Activated B cell treated with CpG ODN at 0.5 μM for 24 hours (primary cell): ENCODE measurements at regions of chr14 and their contacts with region 1.

Region 1: GRCh38 chr14:49867831-49868723 is 15.5 kb upstream of the NEMF start:
- DNase-seq: peak; percentile 85
- ATAC-seq: peak; percentile 84
- H3K4me3 Mint-ChIP-seq: peak overlapping the region; percentile 95
- H3K27ac Mint-ChIP-seq: peak overlapping the region; percentile 100
- H3K4me1 Mint-ChIP-seq: peaks cover 44% of the 10 kb centered on the region
- H3K27me3 Mint-ChIP-seq: no peaks in the 10 kb centered on the region
- CTCF ChIP-seq: no peak

Region 2: DNA sequence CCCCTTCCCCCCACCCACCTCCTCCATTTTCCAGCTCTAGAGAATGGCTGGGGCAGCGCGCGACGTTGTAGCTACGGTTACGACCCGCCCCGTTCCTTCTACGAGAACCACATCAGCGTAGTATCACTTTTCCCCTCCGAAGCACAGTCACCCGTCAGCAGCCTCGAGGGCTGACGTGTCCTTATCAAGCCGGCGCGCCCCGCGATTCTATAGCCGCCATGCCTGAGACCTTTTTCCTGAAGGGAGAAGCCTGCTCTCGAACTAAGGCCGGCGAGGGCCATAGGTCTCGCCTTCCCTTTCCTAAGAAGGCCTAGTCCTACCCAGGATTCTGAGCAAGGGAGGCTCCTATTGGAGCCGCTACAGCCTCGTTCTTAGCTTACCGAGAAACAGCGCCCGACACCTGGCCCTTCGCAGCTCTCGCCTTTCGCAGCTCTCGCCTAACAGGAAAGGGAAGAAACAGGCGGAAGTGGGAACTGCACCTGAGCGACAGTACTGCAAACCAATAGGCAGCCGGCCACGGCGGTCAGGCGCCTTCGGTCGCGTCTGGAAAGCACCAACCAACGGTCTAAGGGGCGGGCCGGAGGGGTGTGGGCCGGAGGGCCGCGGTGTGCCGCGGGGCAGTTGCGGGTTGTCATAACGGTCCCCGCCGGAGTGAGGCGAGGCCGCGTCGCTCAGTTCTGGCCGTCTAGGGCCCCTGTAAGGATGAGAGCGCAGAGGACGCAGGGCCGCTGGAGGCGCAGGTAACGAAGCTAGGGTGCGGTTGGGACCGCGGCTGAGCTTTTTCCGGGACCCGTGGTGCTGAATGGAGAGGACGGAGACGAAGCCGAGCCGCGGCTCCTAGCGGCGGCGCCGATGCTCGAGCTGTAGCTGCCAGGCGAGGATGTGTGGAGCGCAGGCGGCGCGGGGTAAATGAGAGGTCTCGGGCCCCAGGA is 247.6 kb before region 1 on chr14 and contains the starts of genes MGAT2 and RPL36AL:
- CTCF ChIA-PET with region 1: no interaction called
- POLR2A ChIA-PET with region 1: interaction called, 11 read pairs
- intact Hi-C with region 1: no loop called
- DNase-seq: peak; percentile 90
- ATAC-seq: peak; percentile 90
- H3K4me3 Mint-ChIP-seq: peak within 1 kb of the TSS; percentile 97
- H3K27ac Mint-ChIP-seq: peak within 1 kb of the TSS; percentile 97
- H3K4me1 Mint-ChIP-seq: peaks cover 61% of the 10 kb centered on the region
- H3K27me3 Mint-ChIP-seq: no peaks in the 10 kb centered on the region
- CTCF ChIP-seq: no peak
- total RNA-seq, gene MGAT2: 39.7 and 40.5 TPM in 2 replicates
- total RNA-seq, gene RPL36AL: 150 and 166 TPM in 2 replicates

Region 3: GRCh38 chr14:49959822-49960408 is 91.8 kb after region 1 on chr14:
- CTCF ChIA-PET with region 1: interaction called, 12 read pairs
- POLR2A ChIA-PET with region 1: interaction called, 38 read pairs
- intact Hi-C with region 1: no loop called
- DNase-seq: no peak
- ATAC-seq: peak; percentile 59
- H3K4me3 Mint-ChIP-seq: peak overlapping the region; percentile 71
- H3K27ac Mint-ChIP-seq: peak overlapping the region; percentile 96
- H3K4me1 Mint-ChIP-seq: peaks cover 67% of the 10 kb centered on the region
- H3K27me3 Mint-ChIP-seq: no peaks in the 10 kb centered on the region
- CTCF ChIP-seq: no peak

Region 4: GRCh38 chr14:50045039-50045711 is 177.1 kb after region 1 on chr14:
- CTCF ChIA-PET with region 1: interaction called, 7 read pairs
- POLR2A ChIA-PET with region 1: interaction called, 41 read pairs
- intact Hi-C with region 1: no loop called
- DNase-seq: no peak
- ATAC-seq: peak; percentile 70
- H3K4me3 Mint-ChIP-seq: peak overlapping the region; percentile 2
- H3K27ac Mint-ChIP-seq: peak overlapping the region; percentile 92
- H3K4me1 Mint-ChIP-seq: peaks cover 71% of the 10 kb centered on the region
- H3K27me3 Mint-ChIP-seq: no peaks in the 10 kb centered on the region
- CTCF ChIP-seq: no peak

Region 5: DNA sequence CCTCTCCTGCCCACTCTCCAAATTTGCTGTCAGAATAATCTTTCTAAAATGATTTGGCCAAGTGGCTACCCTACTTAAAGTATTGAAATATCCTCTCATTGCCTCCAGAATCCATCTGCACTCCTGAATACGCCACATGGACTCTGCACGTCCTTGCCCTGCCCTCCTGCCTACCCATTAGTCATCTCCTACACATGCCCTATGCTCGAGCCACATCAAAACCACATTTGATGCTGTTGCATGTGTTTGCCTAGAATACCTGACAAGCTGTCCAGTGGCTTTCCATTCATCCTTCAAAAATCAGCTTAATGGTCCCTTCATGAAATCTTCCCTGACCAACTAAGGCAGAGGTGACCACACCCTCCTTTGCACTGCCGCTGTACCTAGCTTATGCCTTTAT is 231.3 kb after region 1 on chr14:
- CTCF ChIA-PET with region 1: interaction called, 63 read pairs
- POLR2A ChIA-PET with region 1: interaction called, 92 read pairs
- intact Hi-C with region 1: no loop called
- DNase-seq: no peak
- ATAC-seq: no peak
- H3K4me3 Mint-ChIP-seq: no peak overlapping the region
- H3K27ac Mint-ChIP-seq: peak overlapping the region; percentile 62
- H3K4me1 Mint-ChIP-seq: peaks cover 74% of the 10 kb centered on the region
- H3K27me3 Mint-ChIP-seq: no peaks in the 10 kb centered on the region
- CTCF ChIP-seq: no peak

Region 6: GRCh38 chr14:50123062-50123461 is 255.0 kb after region 1 on chr14:
- CTCF ChIA-PET with region 1: no interaction called
- POLR2A ChIA-PET with region 1: no interaction called
- intact Hi-C with region 1: no loop called
- DNase-seq: no peak
- ATAC-seq: no peak
- H3K4me3 Mint-ChIP-seq: no peak overlapping the region
- H3K27ac Mint-ChIP-seq: no peak overlapping the region
- H3K4me1 Mint-ChIP-seq: no peaks in the 10 kb centered on the region
- H3K27me3 Mint-ChIP-seq: no peaks in the 10 kb centered on the region
- CTCF ChIP-seq: no peak

Region 7: GRCh38 chr14:50667996-50668825 is 800.1 kb after region 1 on chr14 and contains the start of gene SAV1:
- CTCF ChIA-PET with region 1: no interaction called
- POLR2A ChIA-PET with region 1: no interaction called
- intact Hi-C with region 1: loop called (anchors 10 kb)
- DNase-seq: peak; percentile 63
- ATAC-seq: peak; percentile 65
- H3K4me3 Mint-ChIP-seq: no peak within 1 kb of the TSS
- H3K27ac Mint-ChIP-seq: no peak within 1 kb of the TSS
- H3K4me1 Mint-ChIP-seq: peaks cover 32% of the 10 kb centered on the region
- H3K27me3 Mint-ChIP-seq: no peaks in the 10 kb centered on the region
- CTCF ChIP-seq: no peak
- total RNA-seq, gene SAV1: 31.0 and 33.3 TPM in 2 replicates